RWPE1 (cell line): ENCODE measurements at regions of chr6 and their contacts with region 1.

Region 1: GRCh38 chr6:36874443-36875249 is at the start of gene PPIL1:
- DNase-seq: peak; percentile 94
- H3K27ac ChIP-seq: peak within 1 kb of the TSS; percentile 93
- CTCF ChIP-seq: no peak

Region 2: GRCh38 chr6:36546920-36547645 is 327.6 kb before region 1 on chr6 and contains the start of gene STK38:
- CTCF ChIA-PET with region 1: no interaction called
- POLR2A ChIA-PET with region 1: no interaction called
- DNase-seq: peak; percentile 99
- H3K27ac ChIP-seq: peak within 1 kb of the TSS; percentile 94
- CTCF ChIP-seq: 0 out of 2 replicates have a peak, but pooled peaks have one; percentile 16

Region 3: DNA sequence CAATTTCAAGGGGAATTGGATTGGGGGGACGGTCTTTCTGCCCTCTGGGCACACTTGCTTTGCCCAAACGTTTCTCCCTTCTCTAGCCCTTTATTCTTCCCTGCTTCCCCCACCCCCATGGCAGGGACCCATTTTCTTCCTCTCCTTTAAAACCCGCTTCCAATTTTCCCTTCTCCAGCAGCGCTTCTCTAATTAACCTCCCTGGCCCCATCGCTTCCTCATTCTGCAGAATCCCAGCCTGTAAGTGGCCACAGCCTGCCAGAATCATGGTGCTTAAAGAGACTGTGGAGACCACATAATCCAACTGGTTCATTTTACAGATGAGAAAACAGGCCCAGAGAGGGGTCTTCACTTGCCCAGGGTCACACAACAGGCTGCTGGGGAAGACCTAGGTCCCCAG is 96.8 kb before region 1 on chr6:
- CTCF ChIA-PET with region 1: no interaction called
- POLR2A ChIA-PET with region 1: no interaction called
- DNase-seq: no peak
- H3K27ac ChIP-seq: no peak overlapping the region
- CTCF ChIP-seq: no peak

Region 4: DNA sequence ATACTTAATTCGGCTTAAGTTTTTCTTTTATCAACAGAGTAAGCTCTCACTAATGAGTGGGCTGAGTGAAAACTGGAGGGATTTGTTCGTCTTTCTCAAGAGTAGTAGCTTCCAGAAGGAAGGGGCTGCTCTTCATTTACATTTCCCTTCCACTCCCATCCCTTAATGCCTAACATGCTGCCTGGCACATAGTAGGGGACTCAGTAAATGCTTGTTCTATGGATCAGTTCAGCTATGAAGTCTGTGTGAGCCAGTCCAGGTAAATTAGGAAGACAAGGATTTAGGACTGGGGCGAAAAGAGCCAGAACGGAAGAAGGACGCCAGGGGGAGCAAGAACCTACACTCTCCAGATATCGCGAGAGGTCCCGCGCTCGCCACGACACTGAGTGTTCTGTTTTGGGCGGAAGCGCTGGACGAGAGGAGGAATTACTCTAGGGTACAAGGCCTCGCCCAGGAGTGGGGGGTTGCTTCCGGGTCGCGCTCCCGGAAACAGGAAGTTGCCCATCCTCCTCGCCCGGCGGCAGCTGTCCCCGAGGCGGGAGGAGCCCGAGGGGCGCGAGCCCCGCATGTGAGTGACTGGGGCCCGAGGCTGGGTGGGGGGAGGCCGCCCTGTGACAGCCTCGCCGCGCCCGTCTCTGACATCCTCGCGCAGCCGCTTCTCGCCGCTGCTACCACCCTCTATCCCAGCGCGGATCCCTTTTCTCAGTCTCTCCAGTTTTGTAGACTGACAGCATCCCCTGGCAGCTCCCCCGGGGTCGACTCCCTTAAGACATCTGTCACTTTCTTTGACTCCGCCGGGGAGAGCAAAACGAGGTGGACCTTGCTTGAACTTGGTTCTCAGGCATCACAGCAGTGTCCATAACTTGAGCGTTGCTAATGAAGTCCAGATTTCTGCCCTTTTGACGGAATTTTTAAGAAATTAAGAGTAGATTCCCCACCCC is 11.1 kb after region 1 on chr6 and contains the start of gene C6orf89:
- CTCF ChIA-PET with region 1: interaction called, 21 read pairs
- POLR2A ChIA-PET with region 1: interaction called, 3 read pairs
- DNase-seq: peak; percentile 91
- H3K27ac ChIP-seq: peak within 1 kb of the TSS; percentile 74
- CTCF ChIP-seq: peak; percentile 84